ENCODE measurements at regions of chr22 and their contacts with region 1.

Region 1: DNA sequence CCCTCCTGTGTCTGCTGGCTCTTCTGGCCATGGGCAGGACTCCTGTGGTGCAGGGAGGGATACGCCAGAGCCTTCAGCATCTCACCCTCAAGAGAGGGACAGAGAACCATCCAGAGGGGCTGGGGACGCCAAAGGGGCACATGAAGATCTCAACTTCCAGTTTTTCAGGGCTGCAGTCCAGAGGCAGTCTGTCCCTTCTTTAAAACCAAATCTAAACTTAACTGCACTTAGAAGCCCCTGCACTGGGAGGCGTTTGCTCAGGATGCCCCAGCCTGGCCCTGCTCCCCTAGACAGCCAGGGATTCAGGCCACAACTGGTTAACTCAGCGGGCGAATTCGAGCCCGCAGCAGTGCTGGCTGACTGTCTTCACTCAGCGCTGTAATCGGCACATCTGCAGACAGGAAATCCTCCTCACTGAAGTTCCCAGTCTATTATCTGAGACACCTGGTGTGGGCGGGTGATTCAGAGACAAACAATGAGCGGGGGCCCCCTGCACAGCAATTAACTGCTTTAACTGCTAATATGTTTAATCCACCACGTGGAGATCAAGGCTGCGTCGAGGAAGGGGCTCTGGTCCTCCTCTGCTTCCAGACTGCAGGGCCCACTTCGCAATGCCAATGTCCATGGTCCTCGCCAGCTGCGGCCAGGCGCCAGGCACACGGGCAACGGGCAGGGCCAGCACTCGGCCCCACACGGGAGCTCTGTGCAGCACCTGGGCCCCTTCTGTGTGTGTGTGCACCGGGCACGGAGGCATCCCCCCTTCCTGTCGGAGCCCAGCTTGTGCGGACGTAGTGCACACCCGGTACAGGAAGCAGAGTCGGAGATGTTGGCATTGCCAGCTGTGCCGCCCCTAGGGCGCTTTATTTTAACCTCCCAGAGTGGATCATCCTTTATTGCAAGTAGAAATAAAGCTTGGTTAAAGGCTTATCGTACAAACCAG is 36.9 kb upstream of the GNB1L start:
- DNase-seq: peak; percentile 98
- H3K4me3 ChIP-seq: peak overlapping the region; percentile 59
- H3K27ac ChIP-seq: peak overlapping the region; percentile 99
- H3K4me1 ChIP-seq: peaks cover 99% of the 10 kb centered on the region
- CTCF ChIP-seq: 0 out of 2 replicates have a peak, but pooled peaks have one; percentile 1

Region 2: GRCh38 chr22:19723983-19724827 is 167.4 kb before region 1 on chr22:
- CTCF ChIA-PET with region 1: no interaction called
- POLR2A ChIA-PET with region 1: no interaction called
- intact Hi-C with region 1: no loop called
- DNase-seq: peak; percentile 28
- H3K4me3 ChIP-seq: no peak overlapping the region
- H3K27ac ChIP-seq: no peak overlapping the region
- H3K4me1 ChIP-seq: no peaks in the 10 kb centered on the region
- CTCF ChIP-seq: 0 out of 2 replicates have a peak, but pooled peaks have one; percentile 28

Region 3: GRCh38 chr22:19772422-19773324 is 118.9 kb before region 1 on chr22:
- CTCF ChIA-PET with region 1: interaction called, 6 read pairs
- POLR2A ChIA-PET with region 1: interaction called, 6 read pairs
- intact Hi-C with region 1: loop called (anchors 2 kb)
- DNase-seq: peak; percentile 98
- H3K4me3 ChIP-seq: peak overlapping the region; percentile 60
- H3K27ac ChIP-seq: peak overlapping the region; percentile 81
- H3K4me1 ChIP-seq: peaks cover 53% of the 10 kb centered on the region
- CTCF ChIP-seq: peak; percentile 72

Region 4: GRCh38 chr22:19854778-19855503 is 36.6 kb before region 1 on chr22 and contains the starts of genes GNB1L and RTL10:
- CTCF ChIA-PET with region 1: interaction called, 3 read pairs
- POLR2A ChIA-PET with region 1: interaction called, 20 read pairs
- intact Hi-C with region 1: loop called (anchors 1 kb)
- DNase-seq: peak; percentile 98
- H3K4me3 ChIP-seq: peak within 1 kb of the TSS; percentile 91
- H3K27ac ChIP-seq: peak within 1 kb of the TSS; percentile 84
- H3K4me1 ChIP-seq: peaks cover 37% of the 10 kb centered on the region
- CTCF ChIP-seq: 0 out of 2 replicates have a peak, but pooled peaks have one; percentile 20
- total RNA-seq, gene GNB1L: 21.2 and 26.7 TPM in 2 replicates
- total RNA-seq, gene RTL10: 25.5 and 28.2 TPM in 2 replicates

Region 5: DNA sequence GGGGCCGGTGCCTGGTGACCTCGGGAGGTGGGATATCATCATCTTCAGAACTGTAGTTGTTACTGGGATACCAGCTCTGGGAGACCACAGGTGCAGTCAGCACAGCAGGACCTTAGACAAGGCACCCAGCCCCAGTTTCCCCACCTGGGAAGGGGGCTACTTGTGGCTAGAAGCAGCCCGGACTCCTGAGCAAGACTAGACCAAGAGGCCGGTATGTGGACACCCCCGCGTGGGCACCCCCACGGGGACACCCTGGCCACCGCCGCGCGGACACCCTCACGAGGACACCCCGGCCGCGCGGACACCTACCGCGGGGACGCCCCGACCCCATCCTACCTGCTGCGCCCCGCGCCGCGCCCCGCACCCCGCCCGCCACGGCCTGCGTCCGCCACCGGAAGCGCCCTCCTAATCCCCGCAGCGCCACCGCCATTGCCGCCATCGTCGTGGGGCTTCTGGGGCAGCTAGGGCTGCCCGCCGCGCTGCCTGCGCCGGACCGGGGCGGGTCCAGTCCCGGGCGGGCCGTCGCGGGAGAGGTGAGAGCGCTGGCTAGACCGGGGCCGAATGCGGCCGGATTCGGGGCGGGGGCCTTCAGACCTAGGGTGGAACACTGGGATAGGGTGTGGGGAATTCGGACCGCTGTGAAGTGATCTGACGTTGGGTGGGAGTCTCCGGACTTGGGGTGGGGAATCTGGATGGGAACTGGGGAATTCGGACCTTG is 49.9 kb after region 1 on chr22 and contains the starts of genes COMT and TXNRD2:
- CTCF ChIA-PET with region 1: interaction called, 3 read pairs
- POLR2A ChIA-PET with region 1: interaction called, 4 read pairs
- intact Hi-C with region 1: loop called (anchors 2 kb)
- DNase-seq: peak; percentile 84
- H3K4me3 ChIP-seq: peak within 1 kb of the TSS; percentile 95
- H3K27ac ChIP-seq: peak within 1 kb of the TSS; percentile 66
- H3K4me1 ChIP-seq: peaks cover 29% of the 10 kb centered on the region
- CTCF ChIP-seq: no peak; the same call in 1 of the 2 replicates
- total RNA-seq, gene COMT: 102 and 112 TPM in 2 replicates
- total RNA-seq, gene TXNRD2: 24.1 and 28.9 TPM in 2 replicates